MCF 10A (cell line): ENCODE measurements at regions of chr19 and their contacts with region 1.

Region 1: GRCh38 chr19:5719961-5720790 is at the starts of genes CATSPERD and LONP1:
- DNase-seq: peak; percentile 99
- H3K4me3 Mint-ChIP-seq: peak within 1 kb of the TSS; percentile 86
- H3K27ac Mint-ChIP-seq: peak within 1 kb of the TSS; percentile 89
- H3K4me1 Mint-ChIP-seq: peaks cover 3% of the 10 kb centered on the region
- H3K27me3 Mint-ChIP-seq: no peaks in the 10 kb centered on the region
- CTCF ChIP-seq: peak; percentile 84
- total RNA-seq, gene CATSPERD: not detected in 2 replicates
- total RNA-seq, gene LONP1: 219 and 254 TPM in 2 replicates

Region 2: GRCh38 chr19:5622463-5623396 is 97.4 kb before region 1 on chr19 and contains the starts of genes SAFB and SAFB2:
- CTCF ChIA-PET with region 1: no interaction called
- POLR2A ChIA-PET with region 1: interaction called, 12 read pairs
- intact Hi-C with region 1: no loop called
- DNase-seq: peak; percentile 100
- H3K4me3 Mint-ChIP-seq: peak within 1 kb of the TSS; percentile 100
- H3K27ac Mint-ChIP-seq: peak within 1 kb of the TSS; percentile 100
- H3K4me1 Mint-ChIP-seq: peaks cover 41% of the 10 kb centered on the region
- H3K27me3 Mint-ChIP-seq: no peaks in the 10 kb centered on the region
- CTCF ChIP-seq: no peak
- total RNA-seq, gene SAFB: 135 and 137 TPM in 2 replicates
- total RNA-seq, gene SAFB2: 98.6 and 118 TPM in 2 replicates

Region 3: GRCh38 chr19:5665796-5666513 is 54.2 kb before region 1 on chr19:
- CTCF ChIA-PET with region 1: no interaction called
- POLR2A ChIA-PET with region 1: no interaction called
- intact Hi-C with region 1: no loop called
- DNase-seq: peak; percentile 64
- H3K4me3 Mint-ChIP-seq: no peak overlapping the region
- H3K27ac Mint-ChIP-seq: no peak overlapping the region
- H3K4me1 Mint-ChIP-seq: peaks cover 5% of the 10 kb centered on the region
- H3K27me3 Mint-ChIP-seq: no peaks in the 10 kb centered on the region
- CTCF ChIP-seq: no peak

Region 4: GRCh38 chr19:5697022-5697889 is 22.9 kb before region 1 on chr19:
- CTCF ChIA-PET with region 1: interaction called, 4 read pairs
- POLR2A ChIA-PET with region 1: interaction called, 15 read pairs
- intact Hi-C with region 1: no loop called
- DNase-seq: no peak
- H3K4me3 Mint-ChIP-seq: no peak overlapping the region
- H3K27ac Mint-ChIP-seq: peak overlapping the region; percentile 54
- H3K4me1 Mint-ChIP-seq: no peaks in the 10 kb centered on the region
- H3K27me3 Mint-ChIP-seq: no peaks in the 10 kb centered on the region
- CTCF ChIP-seq: no peak

Region 5: GRCh38 chr19:5775668-5776309 is 55.6 kb after region 1 on chr19:
- CTCF ChIA-PET with region 1: no interaction called
- POLR2A ChIA-PET with region 1: no interaction called
- intact Hi-C with region 1: loop called (anchors 1 kb)
- DNase-seq: peak; percentile 53
- H3K4me3 Mint-ChIP-seq: no peak overlapping the region
- H3K27ac Mint-ChIP-seq: no peak overlapping the region
- H3K4me1 Mint-ChIP-seq: peaks cover 5% of the 10 kb centered on the region
- H3K27me3 Mint-ChIP-seq: no peaks in the 10 kb centered on the region
- CTCF ChIP-seq: no peak

Region 6: GRCh38 chr19:5904352-5905113 is 184.4 kb after region 1 on chr19 and contains the start of gene VMAC:
- CTCF ChIA-PET with region 1: no interaction called
- POLR2A ChIA-PET with region 1: interaction called, 11 read pairs
- intact Hi-C with region 1: no loop called
- DNase-seq: peak; percentile 100
- H3K4me3 Mint-ChIP-seq: peak within 1 kb of the TSS; percentile 97
- H3K27ac Mint-ChIP-seq: peak within 1 kb of the TSS; percentile 98
- H3K4me1 Mint-ChIP-seq: peaks cover 6% of the 10 kb centered on the region
- H3K27me3 Mint-ChIP-seq: no peaks in the 10 kb centered on the region
- CTCF ChIP-seq: no peak
- total RNA-seq, gene VMAC: 6.6 and 7.0 TPM in 2 replicates